ENCODE measurements at regions of chr15 and their contacts with region 1.

Region 1: GRCh38 chr15:75732809-75733451 is 20.3 kb upstream of the CSPG4 start:
- DNase-seq: no peak
- ATAC-seq: peak; percentile 63

Region 2: DNA sequence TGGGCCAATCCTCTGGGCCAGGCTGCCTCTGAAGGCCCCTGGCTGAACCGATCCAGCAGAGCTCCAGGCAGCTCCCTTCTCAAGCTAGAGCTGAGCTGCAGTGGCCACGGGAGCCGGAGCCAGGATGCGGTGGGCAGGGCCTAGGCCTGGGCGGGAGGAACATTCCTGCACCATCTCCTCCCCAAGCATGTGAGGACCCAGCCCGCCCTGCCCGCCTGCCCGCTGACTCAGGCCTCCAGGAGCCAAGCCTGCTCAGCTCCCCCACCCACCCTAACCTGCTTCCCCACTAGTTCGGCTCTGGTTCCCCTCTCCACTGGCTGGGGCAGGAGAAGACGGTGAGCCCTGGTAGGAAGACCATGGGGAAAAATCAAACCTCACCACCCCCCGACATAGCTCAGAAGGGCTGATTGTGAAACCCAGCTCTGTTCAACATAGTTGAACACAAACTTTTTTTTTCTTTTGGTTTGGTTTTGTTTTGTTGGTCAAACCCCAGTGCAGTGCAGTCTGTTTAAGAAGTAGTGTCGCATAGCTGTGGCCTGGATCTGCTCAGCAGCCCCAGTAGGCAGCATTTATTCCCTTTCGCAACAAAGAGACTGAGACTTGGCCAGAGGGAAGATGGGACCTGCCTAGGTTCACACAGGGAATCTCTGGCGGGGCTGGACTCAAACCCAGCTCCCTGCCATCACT is 71.7 kb before region 1 on chr15:
- intact Hi-C with region 1: no loop called
- DNase-seq: peak; percentile 92
- ATAC-seq: peak; percentile 93

Region 3: DNA sequence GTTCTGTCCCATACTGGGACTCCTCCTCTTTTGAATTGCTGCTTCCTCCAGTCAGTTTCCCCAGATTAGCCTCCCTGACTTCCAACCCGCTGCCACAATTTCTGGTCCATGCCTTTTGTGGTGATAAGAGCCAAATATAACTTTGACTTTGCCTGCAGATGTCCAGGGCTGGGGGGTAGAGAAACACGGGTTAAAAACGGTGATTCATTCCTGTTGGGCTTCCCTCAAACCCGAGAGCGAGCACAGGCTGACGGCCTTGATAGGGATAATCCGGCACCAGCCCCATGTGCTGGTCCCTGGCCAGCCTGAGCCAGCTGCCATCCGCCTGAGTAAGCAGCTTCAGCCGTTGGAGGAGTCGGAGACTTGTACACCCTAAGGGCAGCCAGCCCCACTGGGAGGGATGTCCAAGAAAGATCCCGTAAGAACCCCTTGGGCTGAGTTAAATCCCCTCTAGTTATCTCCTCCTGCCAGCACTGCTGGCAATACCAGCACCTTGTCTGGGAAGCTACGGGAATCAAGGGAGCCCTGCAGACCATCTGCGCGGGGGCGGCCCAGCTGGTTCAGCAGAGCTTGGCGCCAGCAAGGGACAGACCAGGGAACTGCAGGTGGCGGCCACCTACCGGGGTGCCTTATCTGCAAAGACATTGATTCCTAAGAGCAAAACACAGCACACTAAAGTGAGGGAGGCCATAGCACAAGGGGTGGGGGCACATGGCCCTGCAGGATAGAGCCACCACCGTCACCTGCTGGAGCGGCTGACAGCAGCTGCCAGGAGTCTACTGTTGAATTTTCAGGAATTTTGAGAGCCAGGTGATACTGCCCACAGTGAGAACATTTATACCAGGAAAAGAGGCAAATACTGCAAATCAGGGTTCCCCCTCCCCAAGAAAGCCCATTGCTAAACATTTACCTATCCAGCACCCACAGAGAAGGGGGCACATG is 38.4 kb before region 1 on chr15:
- intact Hi-C with region 1: loop called (anchors 5 kb)
- DNase-seq: peak; percentile 88
- ATAC-seq: peak; percentile 90

Region 4: DNA sequence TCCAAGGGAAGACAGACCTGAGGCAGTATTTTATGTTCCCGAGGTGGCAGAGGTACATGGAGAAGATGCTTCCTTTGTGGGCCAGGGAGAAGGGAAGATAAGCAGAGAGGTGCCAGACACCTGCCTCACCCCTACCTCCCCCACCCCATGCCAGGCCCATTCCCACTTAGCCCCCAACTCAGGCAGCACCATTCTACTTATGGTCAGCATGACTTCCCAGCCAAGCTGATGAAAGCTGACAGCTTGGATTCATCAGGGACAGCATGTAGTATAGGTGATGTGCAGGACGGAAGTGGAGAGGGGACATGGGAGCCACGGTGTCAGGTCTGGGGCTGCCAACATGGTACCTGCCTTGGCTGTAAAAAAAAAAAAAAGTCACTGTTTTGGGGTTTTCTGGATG is 37.2 kb after region 1 on chr15:
- intact Hi-C with region 1: no loop called
- DNase-seq: no peak
- ATAC-seq: no peak

Region 5: DNA sequence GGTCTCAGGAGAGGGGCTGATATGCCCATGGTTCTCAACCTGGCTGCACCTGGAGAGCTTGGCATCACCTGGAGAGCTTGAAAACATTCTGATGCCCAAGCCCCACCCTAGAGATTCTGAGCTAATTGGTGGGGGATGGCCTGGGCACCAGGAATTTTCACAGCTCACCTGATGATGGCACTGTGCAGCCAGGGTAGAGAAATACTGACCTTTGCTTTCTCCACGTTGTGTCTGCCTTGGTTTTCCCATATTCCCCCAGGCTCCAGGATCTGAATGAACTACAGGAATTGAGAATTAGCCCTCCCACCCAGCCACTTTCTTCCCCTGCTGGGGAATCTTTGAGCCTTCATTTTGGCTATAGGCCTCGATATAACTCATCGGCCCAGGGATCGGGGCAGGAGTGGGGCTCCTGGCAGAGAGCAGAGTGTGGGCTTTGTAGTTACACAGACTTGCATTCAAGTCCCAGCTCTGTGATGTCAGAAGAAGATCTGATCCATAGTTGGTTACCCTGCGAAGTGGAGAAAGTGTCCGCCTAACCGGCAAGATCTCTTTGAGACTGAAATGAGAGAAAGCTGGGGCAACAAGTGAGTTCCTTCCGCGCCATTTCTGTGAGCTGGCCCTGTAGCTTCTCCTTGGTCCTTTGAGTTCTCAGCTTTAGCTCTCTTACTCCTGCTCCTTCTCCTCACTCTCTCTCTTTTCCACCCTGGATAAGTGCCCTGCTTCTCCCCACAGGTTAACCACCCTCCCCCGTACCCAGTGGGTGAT is 77.2 kb after region 1 on chr15:
- intact Hi-C with region 1: no loop called
- DNase-seq: no peak
- ATAC-seq: no peak

Measured in Right ventricle myocardium inferior (tissue), 1 donor.